ENCODE measurements at regions of chr17 and their contacts with region 1.

Region 1: DNA sequence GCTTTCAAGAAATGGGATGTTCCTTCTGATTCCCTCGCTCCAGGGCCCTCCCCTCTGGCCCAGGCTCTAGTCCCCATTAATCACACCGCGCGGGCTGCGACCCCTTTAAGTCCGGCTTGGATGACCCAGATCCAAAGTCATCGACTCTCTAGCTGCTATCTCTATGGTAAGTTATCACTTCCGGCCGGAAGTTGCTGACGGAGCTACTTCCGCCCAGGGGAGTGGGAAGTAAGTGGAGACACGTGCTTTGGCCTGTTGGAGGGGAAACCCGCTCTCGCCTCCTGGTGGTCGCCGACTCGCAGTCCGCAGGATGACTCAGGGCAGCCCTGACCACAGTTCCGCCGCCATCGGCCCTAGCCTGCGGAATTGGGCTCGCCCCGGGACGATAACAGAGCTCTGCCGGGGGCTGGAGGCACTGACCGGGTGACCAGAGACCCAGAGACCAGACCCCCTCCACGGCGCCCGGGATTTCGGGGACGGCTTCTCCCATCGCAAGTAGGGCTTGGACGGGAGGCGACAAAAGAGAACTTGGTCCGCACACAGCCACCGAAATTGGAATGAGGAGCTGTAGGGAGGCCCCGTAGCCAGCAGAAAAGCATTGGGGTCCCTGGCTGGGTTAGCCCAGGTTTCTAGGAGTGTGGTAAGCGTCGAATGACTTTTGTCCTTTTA is 52.2 kb upstream of the SEC14L1 start:
- DNase-seq: peak; percentile 96
- H3K4me3 ChIP-seq: peak overlapping the region; percentile 70 to 96
- H3K27ac ChIP-seq: peak overlapping the region; percentile 90 to 95
- H3K4me1 ChIP-seq: peaks cover 0 to 4% of the 10 kb centered on the region in 2 donors
- H3K27me3 ChIP-seq: no peaks in the 10 kb centered on the region
- CTCF ChIP-seq: peak; percentile 89 to 93 (median 92)
- POLR2A ChIP-seq: peak; percentile 76 to 81

Region 2: GRCh38 chr17:77247048-77247541 is 158.5 kb after region 1 on chr17:
- intact Hi-C with region 1: loop called (anchors 2 kb)
- DNase-seq: peak; percentile 75 to 83
- H3K4me3 ChIP-seq: peak overlapping the region; percentile 40 to 41
- H3K27ac ChIP-seq: peak overlapping the region; percentile 21 to 58
- H3K4me1 ChIP-seq: peaks cover 0 to 6% of the 10 kb centered on the region in 2 donors
- H3K27me3 ChIP-seq: no peaks in the 10 kb centered on the region
- CTCF ChIP-seq: peak; percentile 99 to 100 (median 99)
- POLR2A ChIP-seq: peak in 1 of 2 donors; percentile 4

Measured in uterus (tissue), 4 donors.